ENCODE measurements at regions of chr1 and their contacts with region 1.

Region 1: DNA sequence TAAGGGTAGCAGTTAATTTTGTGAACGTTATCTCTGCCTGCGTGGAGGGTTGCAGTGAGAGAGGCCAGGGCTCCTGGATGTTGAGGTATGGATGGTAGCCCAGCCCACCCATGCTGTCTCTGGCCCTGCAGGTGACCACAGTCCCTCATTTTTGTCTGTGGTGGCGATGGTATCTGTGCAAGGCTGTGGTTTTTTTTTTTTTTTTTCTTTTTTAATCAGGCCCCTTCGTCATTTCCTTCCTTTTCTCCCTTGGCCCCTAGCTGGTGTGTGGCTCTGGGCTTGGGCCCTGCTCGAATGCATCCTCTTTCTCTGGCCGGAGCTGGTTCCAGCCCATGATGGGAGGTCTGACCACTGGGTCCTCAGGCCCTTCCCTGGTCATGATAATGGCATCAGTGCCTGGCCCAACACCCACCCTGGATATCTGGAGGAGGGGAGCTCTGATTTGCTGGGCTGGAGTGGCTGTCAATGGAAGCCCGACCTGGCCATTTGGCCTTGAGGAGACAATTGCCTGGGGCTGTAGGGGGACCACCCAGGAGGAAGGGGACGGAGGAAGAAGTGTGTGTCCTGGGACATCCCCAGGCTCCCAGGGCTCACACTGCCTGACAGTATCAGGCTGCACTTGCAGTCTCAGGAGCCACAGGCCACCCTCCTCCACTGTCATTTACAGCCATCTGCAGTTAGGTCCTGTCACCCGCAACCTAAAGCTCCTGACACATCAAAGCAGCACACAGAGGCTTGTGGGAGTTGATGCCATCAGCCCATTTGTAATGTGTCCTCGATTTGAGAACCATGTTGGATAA is 8.1 kb upstream of the RNF187 start:
- DNase-seq: peak in 2 of 3 donors; percentile 76 to 80
- H3K4me3 ChIP-seq: peak overlapping the region in 4 of 7 experiments; percentile 40 to 65 (median 48)
- H3K27ac ChIP-seq: peak overlapping the region in 1 of 2 experiments; percentile 11
- H3K4me1 ChIP-seq: peaks cover 0 to 41% (median 20%) of the 10 kb centered on the region in 4 experiments
- H3K27me3 ChIP-seq: no peaks in the 10 kb centered on the region

Region 2: DNA sequence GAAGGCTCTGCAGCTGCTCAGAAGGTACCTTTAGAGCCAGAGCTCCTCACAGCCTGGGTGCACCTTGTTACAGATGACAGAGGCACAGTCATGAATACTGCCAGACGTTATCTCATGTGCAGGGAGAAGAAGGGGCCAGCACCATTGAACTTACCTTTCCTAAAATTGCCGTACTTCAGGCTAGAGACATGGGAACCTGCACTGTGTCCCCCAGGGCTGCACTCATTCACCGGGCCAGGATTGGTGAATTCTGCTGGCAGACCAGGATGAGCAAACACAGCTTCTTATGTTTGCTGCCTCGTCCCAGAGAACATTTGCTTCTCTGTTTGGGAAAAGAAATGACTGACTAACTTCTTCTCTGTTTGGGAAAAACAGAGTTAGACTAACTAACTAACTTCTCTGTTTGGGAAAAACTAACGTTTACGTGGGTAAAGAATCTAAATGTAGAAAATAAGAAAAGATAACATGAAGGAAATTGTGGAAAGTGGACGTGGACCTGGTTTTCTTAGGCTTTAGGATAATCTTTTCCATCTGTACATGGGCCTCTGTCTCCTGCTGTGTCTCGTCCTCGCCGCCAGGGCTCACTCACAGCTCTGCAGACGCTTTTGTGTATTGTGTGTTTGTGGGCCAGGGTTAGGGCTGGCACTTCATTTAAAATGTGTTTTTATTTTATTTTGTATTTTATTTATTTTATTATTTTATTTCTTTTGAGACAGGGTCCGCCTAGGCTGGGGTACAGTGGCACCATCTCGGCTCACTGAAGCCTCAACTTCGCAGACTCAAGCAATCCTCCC is 261.4 kb before region 1 on chr1:
- CTCF ChIA-PET with region 1: no interaction called
- POLR2A ChIA-PET with region 1: no interaction called
- DNase-seq: no peak
- H3K4me3 ChIP-seq: no peak overlapping the region
- H3K27ac ChIP-seq: no peak overlapping the region
- H3K4me1 ChIP-seq: peaks cover 0 to 10% (median 7%) of the 10 kb centered on the region in 4 experiments
- H3K27me3 ChIP-seq: no peaks in the 10 kb centered on the region

Region 3: DNA sequence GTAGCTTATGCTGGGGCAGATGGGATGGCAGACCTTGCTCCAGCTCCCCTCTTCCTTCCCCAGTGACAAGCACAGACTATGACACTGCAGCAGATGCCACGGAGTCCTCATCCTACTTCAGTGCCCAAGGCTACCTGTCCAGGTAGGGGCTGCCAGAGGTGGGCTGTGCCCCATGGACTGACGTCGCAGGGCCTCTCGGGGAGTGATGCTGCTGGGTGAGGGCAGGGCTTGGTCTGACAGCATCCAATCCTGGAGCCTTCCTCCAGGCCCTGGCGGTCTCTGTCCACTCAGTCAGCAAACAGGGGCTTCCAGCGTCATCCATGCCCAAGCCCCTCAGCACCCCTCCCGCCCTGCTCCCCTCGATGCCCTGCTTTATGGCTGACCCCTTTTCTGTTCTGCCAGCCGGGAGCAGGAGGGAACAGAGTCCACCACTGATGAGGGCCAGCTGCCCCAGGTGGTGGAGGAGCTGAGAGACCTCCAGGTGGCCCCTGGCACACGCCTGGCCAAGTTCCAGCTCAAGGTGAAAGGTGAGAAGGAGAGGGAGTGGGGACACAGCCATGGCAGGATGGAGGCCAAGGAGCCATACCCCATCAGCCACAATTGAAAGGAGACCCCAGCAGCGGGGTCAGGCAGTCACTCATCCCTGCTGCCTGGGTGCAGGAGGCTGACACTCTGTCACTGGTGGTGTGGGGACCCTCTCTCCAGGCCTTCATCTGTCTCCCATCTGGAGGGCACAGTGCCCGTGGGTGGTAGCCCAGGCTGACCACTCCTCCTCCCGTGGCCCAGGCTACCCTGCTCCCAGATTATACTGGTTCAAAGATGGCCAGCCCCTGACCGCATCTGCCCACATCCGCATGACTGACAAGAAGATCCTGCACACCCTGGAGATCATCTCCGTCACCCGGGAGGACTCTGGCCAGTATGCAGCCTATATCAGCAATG is 146.0 kb before region 1 on chr1:
- CTCF ChIA-PET with region 1: no interaction called
- POLR2A ChIA-PET with region 1: no interaction called
- DNase-seq: no peak
- H3K4me3 ChIP-seq: no peak overlapping the region
- H3K27ac ChIP-seq: no peak overlapping the region
- H3K4me1 ChIP-seq: no peaks in the 10 kb centered on the region
- H3K27me3 ChIP-seq: no peaks in the 10 kb centered on the region

Region 4: DNA sequence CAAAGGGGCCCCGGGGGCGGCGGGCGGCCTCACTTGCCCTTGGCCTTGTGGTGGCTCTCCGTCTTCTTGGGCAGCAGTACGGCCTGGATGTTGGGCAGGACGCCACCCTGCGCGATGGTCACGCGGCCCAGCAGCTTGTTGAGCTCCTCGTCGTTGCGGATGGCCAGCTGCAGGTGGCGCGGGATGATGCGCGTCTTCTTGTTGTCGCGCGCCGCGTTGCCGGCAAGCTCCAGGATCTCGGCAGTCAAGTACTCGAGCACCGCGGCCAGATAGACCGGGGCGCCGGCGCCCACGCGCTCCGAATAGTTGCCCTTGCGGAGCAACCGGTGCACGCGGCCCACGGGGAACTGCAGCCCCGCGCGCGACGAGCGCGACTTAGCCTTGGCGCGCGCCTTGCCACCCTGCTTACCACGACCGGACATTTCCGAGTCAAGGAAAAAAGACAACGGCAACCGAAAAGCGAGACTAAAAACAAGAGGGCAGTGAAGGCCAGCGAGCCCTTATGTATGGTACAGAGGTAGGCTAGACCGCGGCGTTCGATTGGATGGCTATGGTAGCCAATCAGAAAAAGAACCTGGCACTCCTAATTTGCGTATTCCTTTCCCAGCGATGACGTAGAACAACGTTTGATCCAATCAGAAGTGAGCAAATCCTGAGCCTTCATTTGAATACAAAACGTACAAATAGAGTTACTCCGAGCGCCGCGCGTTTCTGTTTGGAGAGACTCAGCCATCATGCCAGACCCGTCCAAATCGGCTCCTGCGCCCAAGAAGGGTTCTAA is 21.5 kb before region 1 on chr1:
- CTCF ChIA-PET with region 1: interaction called, 21 read pairs
- POLR2A ChIA-PET with region 1: no interaction called
- DNase-seq: peak; percentile 98 to 99 (median 99)
- H3K4me3 ChIP-seq: peak overlapping the region; percentile 34 to 91 (median 78)
- H3K27ac ChIP-seq: peak overlapping the region; percentile 64 to 86
- H3K4me1 ChIP-seq: peaks cover 10 to 41% (median 28%) of the 10 kb centered on the region in 4 experiments
- H3K27me3 ChIP-seq: peaks cover 0 to 13% (median 3%) of the 10 kb centered on the region in 5 experiments

Measured in common myeloid progenitor, CD34-positive (primary cell).